H1 (cell line): ENCODE measurements at regions of chr11 and their contacts with region 1.

Region 1: DNA sequence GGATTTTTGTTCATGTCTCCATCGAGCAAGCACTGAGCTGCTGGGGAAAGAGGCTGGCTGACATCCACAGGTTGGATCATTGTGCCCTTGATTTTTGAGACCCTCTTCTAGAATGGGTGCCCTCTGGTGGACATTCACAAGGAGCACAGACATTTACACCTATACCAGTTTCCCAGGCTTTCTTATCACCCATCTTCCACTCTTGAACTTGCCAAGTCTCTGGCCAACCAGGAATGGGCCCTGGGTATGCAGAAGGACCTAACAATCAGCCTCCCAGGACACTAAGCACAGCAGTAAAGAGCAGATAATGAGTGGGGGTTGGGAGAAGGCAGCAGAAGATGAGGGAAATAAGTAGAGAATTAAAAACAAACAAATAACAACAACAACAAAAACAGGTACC is 5.7 kb upstream of the INTS4 start:
- DNase-seq: peak in 1 of 2 experiments; percentile 56
- H3K4me3 ChIP-seq: no peak overlapping the region
- H3K27ac ChIP-seq: no peak overlapping the region
- H3K4me1 ChIP-seq: peaks cover 0 to 2% (median 0%) of the 10 kb centered on the region in 4 experiments; a peak in 2 of 7 replicates
- H3K27me3 ChIP-seq: no peaks in the 10 kb centered on the region; a peak in 1 of 7 replicates
- CTCF ChIP-seq: peak; percentile 5 to 77 (median 67)
- EP300 ChIP-seq: no peak
- POLR2A ChIP-seq: no peak
- RAD21 ChIP-seq: peak; percentile 58 to 62

Region 2: GRCh38 chr11:78010310-78010709 is 10.1 kb after region 1 on chr11:
- CTCF ChIA-PET with region 1: interaction called, 21 read pairs
- POLR2A ChIA-PET with region 1: no interaction called
- DNase-seq: no peak
- H3K4me3 ChIP-seq: no peak overlapping the region
- H3K27ac ChIP-seq: no peak overlapping the region
- H3K4me1 ChIP-seq: no peaks in the 10 kb centered on the region
- H3K27me3 ChIP-seq: no peaks in the 10 kb centered on the region
- CTCF ChIP-seq: no peak
- EP300 ChIP-seq: no peak
- POLR2A ChIP-seq: no peak
- RAD21 ChIP-seq: no peak

Region 3: GRCh38 chr11:78022397-78023396 is 22.5 kb after region 1 on chr11 and contains the start of gene KCTD14:
- CTCF ChIA-PET with region 1: interaction called, 19 read pairs
- POLR2A ChIA-PET with region 1: interaction called, 6 read pairs
- DNase-seq: peak in 1 of 2 experiments; percentile 78
- H3K4me3 ChIP-seq: peak within 1 kb of the TSS; percentile 43 to 75 (median 64)
- H3K27ac ChIP-seq: peak within 1 kb of the TSS; percentile 35; the same call in 1 of the 2 replicates
- H3K4me1 ChIP-seq: peaks cover 0 to 13% (median 8%) of the 10 kb centered on the region in 4 experiments; a peak in 6 of 7 replicates
- H3K27me3 ChIP-seq: no peaks in the 10 kb centered on the region
- CTCF ChIP-seq: no peak
- EP300 ChIP-seq: no peak
- POLR2A ChIP-seq: peak; percentile 10 to 88
- RAD21 ChIP-seq: no peak
- total RNA-seq, gene KCTD14: 21.6 and 22.7 TPM in 2 replicates